WTC11 (cell line): ENCODE measurements at regions of chr1 and their contacts with region 1.

Region 1: DNA sequence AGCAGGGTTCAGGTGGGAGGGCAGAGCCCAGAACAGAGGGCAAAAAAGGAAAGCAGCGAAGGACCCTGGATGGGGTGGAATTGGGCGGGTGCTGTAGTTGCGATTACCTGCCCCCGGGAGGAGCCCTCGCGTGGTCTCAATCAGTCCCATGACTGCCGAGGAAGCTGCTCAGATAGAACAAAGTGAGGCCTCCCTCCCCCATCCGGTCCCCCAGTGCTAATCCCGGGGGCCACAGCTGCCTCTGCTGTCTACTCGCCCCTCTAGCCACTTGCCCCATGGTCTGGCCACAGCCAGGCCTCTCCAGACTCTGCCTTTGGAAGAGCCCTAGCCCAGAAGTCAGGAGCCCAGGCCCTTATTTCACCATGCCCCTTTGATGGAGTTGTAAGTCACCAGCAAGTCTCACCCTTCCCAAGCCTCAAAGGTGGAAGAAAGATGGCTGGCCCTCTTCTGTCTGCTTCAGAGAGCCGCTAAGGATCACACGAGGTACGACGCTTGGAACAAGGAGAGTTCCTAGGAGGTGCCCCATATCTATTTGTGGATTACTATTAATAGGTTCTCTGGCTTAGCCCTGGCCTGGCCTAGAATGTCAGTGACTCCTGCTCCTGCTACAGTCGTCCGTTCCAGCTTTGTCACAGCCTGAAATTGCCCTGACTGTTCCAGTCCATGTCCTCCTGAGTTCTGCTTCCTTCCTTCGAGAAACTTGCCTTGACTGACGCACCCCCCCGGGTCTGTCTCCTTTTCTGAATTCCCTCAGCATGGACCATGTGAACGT is 16.4 kb downstream of the ECHDC2 start:
- DNase-seq: peak; percentile 78
- ATAC-seq: peak; percentile 95
- H3K4me3 Mint-ChIP-seq: no peak overlapping the region
- H3K27ac Mint-ChIP-seq: 0 out of 2 replicates have a peak overlapping the region, but pooled peaks have one; percentile 4
- H3K4me1 Mint-ChIP-seq: peaks cover 29% of the 10 kb centered on the region
- H3K27me3 Mint-ChIP-seq: no peaks in the 10 kb centered on the region
- CTCF ChIP-seq: no peak

Region 2: DNA sequence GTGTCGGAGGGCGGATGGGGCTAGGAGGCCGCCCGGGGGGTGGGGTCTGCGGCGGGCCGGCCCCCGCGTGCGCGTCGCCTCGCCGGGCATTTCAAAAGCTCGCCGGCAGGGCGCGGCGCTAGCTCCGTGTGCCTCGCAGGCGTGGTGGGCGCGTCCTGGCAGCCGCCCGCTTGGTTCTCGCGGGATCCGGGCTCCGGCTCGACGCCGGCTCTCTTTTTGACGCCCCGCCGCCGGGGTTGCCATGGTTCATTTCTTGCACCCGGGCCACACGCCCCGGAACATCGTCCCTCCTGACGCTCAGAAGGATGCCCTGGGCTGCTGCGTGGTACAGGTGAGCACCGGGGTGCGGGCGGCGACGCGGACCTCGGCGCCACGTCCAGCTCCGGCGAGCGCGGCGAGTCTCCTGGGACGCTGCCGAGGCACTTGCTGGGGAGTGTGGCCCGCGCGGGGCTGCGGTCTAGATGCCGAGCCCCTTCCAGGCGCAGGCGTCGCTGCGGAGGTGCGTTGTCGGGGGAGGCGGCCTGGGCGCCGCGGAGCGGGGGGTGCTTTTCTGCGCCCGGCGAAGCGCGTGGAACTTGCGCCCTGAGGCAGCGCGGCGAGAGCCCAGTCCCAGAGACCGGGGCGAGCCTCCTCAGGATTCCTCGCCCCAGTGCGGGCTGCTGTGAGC is 62.3 kb before region 1 on chr1 and contains the start of gene ZYG11A:
- CTCF ChIA-PET with region 1: interaction called, 11 read pairs
- POLR2A ChIA-PET with region 1: no interaction called
- DNase-seq: peak; percentile 80
- ATAC-seq: peak; percentile 80
- H3K4me3 Mint-ChIP-seq: peak within 1 kb of the TSS; percentile 80
- H3K27ac Mint-ChIP-seq: no peak within 1 kb of the TSS
- H3K4me1 Mint-ChIP-seq: peaks cover 9% of the 10 kb centered on the region
- H3K27me3 Mint-ChIP-seq: peaks cover 37% of the 10 kb centered on the region
- CTCF ChIP-seq: no peak
- total RNA-seq, gene ZYG11A: 5.2 to 7.3 TPM (median 6.1 TPM) in 3 replicates

Region 3: GRCh38 chr1:52887483-52887882 is 17.6 kb before region 1 on chr1:
- CTCF ChIA-PET with region 1: interaction called, 10 read pairs
- POLR2A ChIA-PET with region 1: interaction called, 6 read pairs
- DNase-seq: no peak
- ATAC-seq: no peak
- H3K4me3 Mint-ChIP-seq: no peak overlapping the region
- H3K27ac Mint-ChIP-seq: no peak overlapping the region
- H3K4me1 Mint-ChIP-seq: no peaks in the 10 kb centered on the region
- H3K27me3 Mint-ChIP-seq: no peaks in the 10 kb centered on the region
- CTCF ChIP-seq: no peak